Left cardiac atrium (tissue), 4 donors: ENCODE measurements at regions of chr11 and their contacts with region 1.

Region 1: DNA sequence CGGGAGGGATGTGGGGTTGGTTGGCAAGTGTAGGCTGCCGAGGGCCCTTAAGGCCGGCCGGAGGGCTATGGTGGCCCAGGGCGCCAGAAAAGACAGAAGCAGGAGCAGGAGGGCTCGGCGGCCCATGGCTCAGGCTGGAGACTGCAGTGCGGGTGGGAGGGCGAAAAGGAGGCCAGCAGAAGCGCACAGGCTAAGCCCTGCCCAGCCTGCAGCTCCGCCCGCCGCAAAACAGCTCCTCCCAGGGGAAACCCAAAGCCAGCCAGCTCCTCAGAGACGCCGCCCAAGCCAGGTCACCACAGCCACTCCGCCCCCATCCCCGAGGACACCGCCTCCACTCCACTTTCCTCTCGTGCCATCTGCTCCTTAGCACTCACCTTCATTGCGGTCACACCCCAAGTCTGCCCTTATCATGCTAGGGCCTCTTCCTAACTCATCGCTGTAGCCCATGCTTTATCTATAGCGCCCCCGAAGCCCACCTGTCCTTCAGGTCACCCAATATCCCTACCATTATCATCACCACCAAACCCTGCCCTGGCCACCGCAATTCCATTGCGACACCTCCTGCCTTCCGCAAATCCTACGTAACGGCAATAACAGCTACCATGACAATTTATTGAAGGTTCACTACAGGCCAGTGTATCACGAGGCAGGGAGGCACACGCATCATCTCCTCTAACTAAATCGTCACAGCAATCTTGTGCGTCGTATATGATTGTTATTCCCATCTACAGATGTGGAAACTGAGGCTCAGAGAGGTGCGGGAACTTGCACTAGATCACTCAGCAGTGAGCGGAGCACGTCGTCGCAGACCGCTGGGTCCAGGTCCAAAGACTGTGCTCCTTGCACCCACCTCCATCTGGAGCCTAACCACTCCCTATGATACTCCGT is at the start of gene PRCP:
- DNase-seq: peak; percentile 95
- ATAC-seq: peak; percentile 94 to 96
- total RNA-seq, gene PRCP: 65.5 to 97.4 TPM

Region 2: GRCh38 chr11:82557274-82557673 is 343.2 kb before region 1 on chr11:
- intact Hi-C with region 1: no loop called
- DNase-seq: peak; percentile 22
- ATAC-seq: peak; percentile 38 to 51

Region 3: DNA sequence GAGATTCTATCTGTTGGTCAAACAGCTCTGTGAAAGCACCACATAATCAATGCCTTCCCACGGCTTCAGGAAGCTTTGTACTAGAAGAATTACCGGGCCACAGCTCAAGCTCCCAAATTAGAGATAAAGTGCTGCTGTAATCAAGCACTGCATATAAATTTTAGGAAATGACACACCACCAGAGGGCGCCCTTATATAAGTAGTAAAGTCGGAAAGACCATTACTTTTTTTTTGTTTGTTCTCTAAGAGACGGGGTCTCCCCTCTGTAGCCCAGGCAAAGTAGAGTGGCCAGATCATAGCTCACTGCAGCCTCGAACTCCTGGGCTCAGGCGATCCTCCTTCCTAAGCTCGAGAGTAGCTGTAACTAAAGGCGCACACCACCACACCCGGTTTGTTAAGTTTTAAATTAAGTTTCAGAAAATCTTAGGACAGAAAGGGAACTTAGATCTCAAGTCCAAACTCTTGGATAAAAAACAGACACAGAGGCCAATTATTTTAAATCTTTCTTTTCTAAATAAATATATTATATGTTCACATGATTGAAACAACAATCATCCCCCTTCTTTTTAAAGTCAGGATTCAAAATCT is 32.9 kb before region 1 on chr11:
- intact Hi-C with region 1: loop called in 1 of 2 experiments (anchors 5 kb)
- DNase-seq: peak; percentile 82
- ATAC-seq: peak; percentile 45 to 53

Region 4: DNA sequence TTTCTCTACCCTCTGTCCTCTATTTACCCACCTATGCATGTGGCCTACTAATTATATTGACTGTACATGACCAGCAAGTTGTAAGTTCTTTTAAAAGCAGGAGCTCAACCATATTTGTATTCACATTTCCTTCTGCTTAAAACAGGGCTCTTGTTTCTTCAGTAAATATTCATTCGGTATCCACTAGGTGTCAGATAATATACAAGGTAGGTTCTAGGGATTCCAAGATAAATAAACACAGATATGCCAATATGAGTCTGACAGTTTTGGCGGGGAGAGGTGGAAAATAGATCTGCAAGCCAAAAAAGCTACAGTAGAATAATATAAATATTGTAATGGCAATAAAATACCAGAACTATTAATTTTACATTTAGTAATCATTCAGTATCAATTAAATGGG is 186.5 kb after region 1 on chr11:
- intact Hi-C with region 1: loop called in 1 of 2 experiments (anchors 10 kb)
- DNase-seq: no peak
- ATAC-seq: peak; percentile 38 to 50

Region 5: DNA sequence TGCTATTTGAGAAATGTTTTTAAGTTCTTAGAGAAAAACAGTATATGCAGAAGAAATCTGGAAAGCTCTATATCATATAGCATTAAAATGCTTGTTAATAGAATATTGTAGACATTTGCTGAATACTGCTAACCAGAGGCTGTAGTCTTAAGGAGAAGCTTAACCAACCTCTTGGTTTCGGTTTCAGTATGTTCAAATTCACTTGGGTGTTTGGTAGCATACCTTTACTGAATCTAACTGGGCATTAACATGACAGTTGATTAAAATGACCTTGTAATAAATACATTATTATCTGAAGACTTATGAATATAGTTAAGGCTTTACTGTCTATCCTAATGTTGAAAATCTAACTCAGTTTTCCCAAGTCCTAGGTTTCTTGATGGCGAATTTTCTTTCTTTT is 261.9 kb after region 1 on chr11:
- intact Hi-C with region 1: loop called in 1 of 2 experiments (anchors 10 kb)
- DNase-seq: no peak
- ATAC-seq: no peak

Region 6: DNA sequence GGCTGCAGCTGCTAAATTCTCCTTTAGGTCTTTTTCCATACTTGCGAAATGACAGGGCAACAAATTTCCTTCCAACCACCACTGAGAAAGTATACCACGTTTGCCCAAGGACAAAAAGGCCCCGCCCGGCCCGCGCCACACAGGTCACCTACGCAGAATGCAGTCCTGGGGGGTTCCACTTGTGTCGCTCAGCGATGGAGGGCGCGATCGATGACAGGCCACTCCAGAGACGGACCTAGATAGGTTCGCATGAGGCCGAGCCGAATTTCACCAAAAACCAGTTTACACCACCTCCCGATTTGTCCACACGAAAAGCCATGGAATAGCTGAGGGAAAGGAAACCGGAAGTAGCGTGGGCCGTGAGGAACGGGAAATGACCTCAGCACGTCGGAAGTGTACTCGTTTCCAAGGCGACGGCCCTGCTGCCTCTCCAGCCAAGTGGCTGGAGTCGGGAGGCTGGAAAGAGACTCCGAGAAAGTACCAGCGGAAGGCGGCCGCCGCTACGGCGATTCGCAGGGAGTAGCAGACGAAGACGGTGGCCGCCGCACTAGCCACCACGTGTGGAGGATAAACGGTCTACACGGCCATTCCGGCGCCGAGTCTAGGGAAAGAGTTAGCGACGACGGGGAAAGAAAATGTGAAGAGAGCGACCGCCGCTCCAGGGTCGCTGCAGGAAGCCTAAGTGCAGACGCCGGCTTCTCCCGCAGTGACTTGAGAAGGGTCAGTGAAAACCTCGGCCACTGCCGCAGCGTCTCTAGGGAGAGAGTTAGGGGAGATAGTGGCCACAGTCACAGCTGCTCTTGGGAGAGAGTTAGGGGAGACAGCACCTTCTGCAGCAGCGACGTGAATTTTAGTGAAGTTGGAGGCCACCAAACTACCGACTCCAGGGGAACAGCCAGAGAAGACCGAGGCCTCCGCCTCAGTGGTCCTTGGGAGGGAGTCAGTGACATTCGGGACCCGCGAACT is 293.1 kb after region 1 on chr11 and contains the start of gene ANKRD42:
- intact Hi-C with region 1: loop called in 1 of 2 experiments (anchors 5 kb)
- DNase-seq: peak; percentile 96
- ATAC-seq: peak; percentile 97
- total RNA-seq, gene ANKRD42: 5.0 to 7.0 TPM

Region 7: DNA sequence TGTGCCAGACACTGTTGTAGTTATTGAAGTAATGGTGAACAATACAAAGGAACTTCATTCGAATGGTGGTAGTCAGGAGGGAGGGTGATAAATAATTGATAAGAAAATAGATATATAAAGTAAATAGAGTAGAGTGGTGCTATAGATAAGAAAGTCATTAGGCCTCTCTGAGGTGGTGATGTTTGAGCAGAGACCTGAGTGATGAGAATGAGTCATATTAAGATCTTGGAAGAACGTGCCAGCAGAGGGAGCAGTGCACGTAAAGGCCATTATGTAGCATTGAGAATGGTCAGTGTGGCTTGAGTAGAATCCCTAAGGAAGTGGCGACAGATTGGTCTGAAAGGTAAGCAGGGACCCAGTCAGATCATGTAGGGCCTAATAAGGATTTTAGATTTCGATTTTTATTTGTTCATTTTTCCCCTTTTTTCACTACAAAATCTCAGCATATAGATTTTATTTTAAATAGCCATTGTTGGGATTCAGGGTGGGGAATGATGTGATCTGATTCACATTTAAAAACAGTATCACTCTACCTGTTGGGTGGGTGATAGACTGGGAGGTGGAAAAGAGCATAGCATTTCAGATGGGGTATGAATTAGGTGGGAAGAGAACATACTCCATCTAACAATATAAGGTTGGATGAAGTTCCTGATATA is 340.9 kb after region 1 on chr11:
- intact Hi-C with region 1: loop called in 1 of 2 experiments (anchors 10 kb)
- DNase-seq: peak; percentile 54
- ATAC-seq: peak; percentile 79 to 93